ENCODE measurements at regions of chr10 and their contacts with region 1.

Region 1: DNA sequence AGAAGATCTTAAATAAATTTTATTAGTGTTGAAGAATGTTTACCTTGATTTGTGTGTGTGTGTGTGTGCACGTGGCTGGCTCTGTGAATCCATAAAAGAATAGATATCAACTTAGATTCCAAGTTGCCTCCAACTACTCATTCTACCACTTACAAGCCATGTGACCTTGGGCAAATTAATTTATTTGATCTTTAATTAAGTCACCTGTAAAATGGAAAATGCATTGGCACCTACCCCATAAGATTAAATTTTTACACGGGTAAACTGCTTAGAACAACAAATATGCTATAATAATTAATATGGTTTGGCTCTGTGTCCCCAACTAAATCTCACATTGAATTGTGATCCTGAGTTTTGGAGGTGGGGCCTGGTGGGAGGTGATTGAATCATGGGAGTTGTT is 604.9 kb upstream of the NRG3 start:
- DNase-seq: no peak
- H3K4me3 ChIP-seq: no peak overlapping the region
- H3K27ac ChIP-seq: no peak overlapping the region
- H3K4me1 ChIP-seq: no peaks in the 10 kb centered on the region
- H3K27me3 ChIP-seq: no peaks in the 10 kb centered on the region
- CTCF ChIP-seq: no peak
- EP300 ChIP-seq: no peak
- POLR2A ChIP-seq: no peak

Region 2: DNA sequence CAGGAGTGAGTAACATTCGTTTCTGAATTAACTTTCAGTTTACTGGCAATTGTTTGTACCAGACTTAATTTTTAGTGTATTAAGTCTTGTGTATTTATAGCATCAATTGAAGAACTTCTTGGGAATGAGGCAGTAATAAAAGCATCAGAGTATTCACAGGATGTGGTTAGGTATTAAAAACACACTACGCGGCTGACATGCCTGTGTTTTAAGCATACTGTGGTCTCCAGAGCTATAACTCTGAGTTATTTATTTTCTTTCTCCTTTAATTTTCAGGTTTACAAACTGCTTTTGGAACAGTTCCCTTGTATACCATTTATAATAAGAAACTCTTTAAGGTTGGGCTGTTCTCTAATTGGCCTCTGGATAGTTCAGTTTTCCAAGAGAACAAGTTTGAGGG is 21.2 kb before region 1 on chr10:
- intact Hi-C with region 1: loop called in 1 of 4 experiments (anchors 1 kb)
- DNase-seq: no peak
- H3K4me3 ChIP-seq: no peak overlapping the region
- H3K27ac ChIP-seq: no peak overlapping the region
- H3K4me1 ChIP-seq: no peaks in the 10 kb centered on the region
- H3K27me3 ChIP-seq: no peaks in the 10 kb centered on the region
- CTCF ChIP-seq: no peak
- EP300 ChIP-seq: no peak
- POLR2A ChIP-seq: no peak

Region 3: GRCh38 chr10:81386817-81387216 is 116.8 kb after region 1 on chr10:
- intact Hi-C with region 1: no loop called
- DNase-seq: no peak
- H3K4me3 ChIP-seq: no peak overlapping the region
- H3K27ac ChIP-seq: no peak overlapping the region
- H3K4me1 ChIP-seq: no peaks in the 10 kb centered on the region
- H3K27me3 ChIP-seq: no peaks in the 10 kb centered on the region
- CTCF ChIP-seq: no peak
- EP300 ChIP-seq: no peak
- POLR2A ChIP-seq: no peak

Region 4: GRCh38 chr10:81548160-81548559 is 278.1 kb after region 1 on chr10:
- intact Hi-C with region 1: no loop called
- DNase-seq: no peak
- H3K4me3 ChIP-seq: no peak overlapping the region
- H3K27ac ChIP-seq: no peak overlapping the region
- H3K4me1 ChIP-seq: no peaks in the 10 kb centered on the region
- H3K27me3 ChIP-seq: no peaks in the 10 kb centered on the region
- CTCF ChIP-seq: no peak
- EP300 ChIP-seq: no peak
- POLR2A ChIP-seq: no peak